Endothelial cell of umbilical vein (primary cell): ENCODE measurements at regions of chr10 and their contacts with region 1.

Region 1: GRCh38 chr10:75210282-75211006 is at the start of gene VDAC2:
- DNase-seq: peak; percentile 90
- H3K4me3 ChIP-seq: peak within 1 kb of the TSS; percentile 63 to 99 (median 96)
- H3K27ac ChIP-seq: peak within 1 kb of the TSS; percentile 94
- H3K4me1 ChIP-seq: peaks cover 21% of the 10 kb centered on the region
- H3K27me3 ChIP-seq: no peaks in the 10 kb centered on the region
- CTCF ChIP-seq: no peak
- POLR2A ChIP-seq: peak; percentile 91
- total RNA-seq, gene VDAC2: 220 and 222 TPM in 2 replicates

Region 2: DNA sequence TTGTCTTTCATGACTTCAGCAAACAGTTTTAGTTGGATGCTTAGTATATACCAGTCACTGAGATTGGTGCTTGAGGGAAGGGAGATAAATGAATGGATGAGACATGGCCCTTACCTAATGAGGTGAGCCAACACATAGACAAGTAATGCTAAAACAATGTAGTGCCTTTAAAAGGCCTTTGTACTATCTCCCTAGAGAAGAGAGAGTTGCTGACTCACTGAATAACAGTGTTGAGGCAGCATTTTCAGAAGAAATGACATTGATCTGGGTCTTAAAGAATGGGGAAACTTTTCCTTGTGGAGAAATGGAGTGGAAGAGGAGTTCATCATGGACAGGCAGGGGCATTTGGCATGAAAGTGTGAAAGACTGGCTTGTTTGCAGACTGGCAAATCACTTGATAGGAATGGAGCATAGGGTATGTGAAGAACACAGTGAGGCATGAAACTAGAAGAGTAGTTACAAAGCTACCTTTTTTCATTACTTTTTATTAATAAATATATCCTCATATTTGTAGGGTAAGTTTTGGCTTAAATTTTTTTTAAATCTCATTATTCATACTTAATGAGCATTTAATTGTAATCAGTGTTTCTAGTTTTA is 292.9 kb before region 1 on chr10:
- CTCF ChIA-PET with region 1: no interaction called
- POLR2A ChIA-PET with region 1: no interaction called
- dilution Hi-C with region 1: no loop called
- intact Hi-C with region 1: no loop called
- DNase-seq: no peak
- H3K4me3 ChIP-seq: no peak overlapping the region
- H3K27ac ChIP-seq: no peak overlapping the region
- H3K4me1 ChIP-seq: no peaks in the 10 kb centered on the region
- H3K27me3 ChIP-seq: no peaks in the 10 kb centered on the region
- CTCF ChIP-seq: no peak
- POLR2A ChIP-seq: no peak

Region 3: GRCh38 chr10:75223507-75223906 is 13.1 kb after region 1 on chr10:
- CTCF ChIA-PET with region 1: interaction called, 12 read pairs
- POLR2A ChIA-PET with region 1: interaction called, 23 read pairs
- dilution Hi-C with region 1: no loop called
- intact Hi-C with region 1: loop called (anchors 1 kb)
- DNase-seq: no peak
- H3K4me3 ChIP-seq: no peak overlapping the region
- H3K27ac ChIP-seq: peak overlapping the region; percentile 12
- H3K4me1 ChIP-seq: peaks cover 40% of the 10 kb centered on the region
- H3K27me3 ChIP-seq: no peaks in the 10 kb centered on the region
- CTCF ChIP-seq: no peak
- POLR2A ChIP-seq: no peak